Dendritic cell treated with granulocyte-macrophage colony-stimulating factor and Interleukin-4, amounts not matched to agents 40 ng/mL and 50 ng/mL, for 4 days (primary cell): ENCODE measurements at regions of chr13 and their contacts with region 1.

Region 1: GRCh38 chr13:110808138-110808537 is 94.6 kb downstream of the ING1 start:
- H3K4me3 Mint-ChIP-seq: no peak overlapping the region
- H3K27ac Mint-ChIP-seq: no peak overlapping the region
- H3K4me1 Mint-ChIP-seq: peaks cover 5% of the 10 kb centered on the region
- H3K27me3 Mint-ChIP-seq: peaks cover 43% of the 10 kb centered on the region

Region 2: GRCh38 chr13:110722971-110723370 is 85.2 kb before region 1 on chr13:
- intact Hi-C with region 1: loop called (anchors 5 kb)
- H3K4me3 Mint-ChIP-seq: no peak overlapping the region
- H3K27ac Mint-ChIP-seq: no peak overlapping the region
- H3K4me1 Mint-ChIP-seq: peaks cover 7% of the 10 kb centered on the region
- H3K27me3 Mint-ChIP-seq: no peaks in the 10 kb centered on the region

Region 3: DNA sequence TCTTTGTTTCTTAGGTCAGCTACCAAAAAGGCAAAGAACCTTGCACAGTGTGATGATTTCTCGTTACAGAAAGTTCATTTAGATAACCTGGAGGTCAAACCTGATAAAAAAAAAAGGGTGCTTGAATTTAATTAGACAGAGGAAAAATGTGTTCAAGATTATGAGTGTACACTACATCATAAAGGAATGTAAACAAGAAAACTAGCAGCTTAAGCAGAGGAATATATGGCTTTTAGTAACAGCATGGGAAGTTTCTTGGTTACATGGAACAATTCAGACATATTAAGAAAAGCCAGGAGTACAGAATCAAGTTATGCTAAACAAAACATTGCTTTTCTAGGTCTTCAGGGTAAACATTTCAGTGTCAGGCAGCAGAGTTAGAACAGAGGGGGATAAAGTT is 61.7 kb before region 1 on chr13:
- intact Hi-C with region 1: no loop called
- H3K4me3 Mint-ChIP-seq: no peak overlapping the region
- H3K27ac Mint-ChIP-seq: no peak overlapping the region
- H3K4me1 Mint-ChIP-seq: no peaks in the 10 kb centered on the region
- H3K27me3 Mint-ChIP-seq: no peaks in the 10 kb centered on the region